HEK293 (cell line): ENCODE measurements at regions of chr6 and their contacts with region 1.

Region 1: DNA sequence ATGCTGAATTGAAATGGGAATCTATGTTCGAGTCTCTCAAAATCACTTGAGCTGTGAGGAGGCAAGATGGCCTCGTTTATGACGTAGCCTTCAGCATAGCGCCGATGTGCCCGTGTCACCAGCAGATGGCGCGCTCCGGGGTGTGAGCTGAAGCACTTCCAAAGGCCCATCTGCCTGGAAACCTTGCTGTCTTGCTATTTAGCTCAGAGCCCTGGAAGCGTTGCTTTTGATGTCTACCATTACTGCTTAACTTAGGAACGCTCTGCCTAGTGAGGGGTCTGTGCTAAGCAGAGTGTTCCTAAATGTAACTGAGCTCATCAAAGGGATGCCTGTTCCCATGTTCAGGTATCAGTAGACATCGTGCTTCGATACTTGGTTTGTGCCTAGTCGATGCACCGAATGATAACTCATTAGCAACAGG is 67.7 kb downstream of the SYCP2L start:
- H3K4me3 ChIP-seq: no peak overlapping the region
- H3K27ac ChIP-seq: no peak overlapping the region
- H3K4me1 ChIP-seq: no peaks in the 10 kb centered on the region
- CTCF ChIP-seq: peak; percentile 80

Region 2: DNA sequence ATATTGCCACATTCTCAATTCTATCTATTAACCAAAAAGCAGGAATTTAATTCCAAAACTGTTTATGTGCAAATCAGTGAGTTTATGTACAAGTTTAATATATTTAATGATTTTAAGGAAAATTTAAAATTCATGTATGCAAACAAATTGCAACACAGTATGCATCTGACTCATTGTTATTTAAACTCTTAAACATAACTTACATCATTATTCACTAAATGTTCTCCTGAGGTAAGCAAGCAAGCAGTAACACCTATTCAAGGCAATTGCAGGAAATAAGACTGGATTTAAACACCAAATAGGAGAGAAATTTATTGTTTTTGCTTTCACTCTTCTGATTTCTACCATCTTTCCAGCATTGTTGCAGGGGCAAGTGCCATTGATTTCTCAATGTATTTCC is 779.3 kb before region 1 on chr6:
- CTCF ChIA-PET with region 1: no interaction called
- POLR2A ChIA-PET with region 1: no interaction called
- H3K4me3 ChIP-seq: no peak overlapping the region
- H3K27ac ChIP-seq: no peak overlapping the region
- H3K4me1 ChIP-seq: no peaks in the 10 kb centered on the region
- CTCF ChIP-seq: no peak

Region 3: DNA sequence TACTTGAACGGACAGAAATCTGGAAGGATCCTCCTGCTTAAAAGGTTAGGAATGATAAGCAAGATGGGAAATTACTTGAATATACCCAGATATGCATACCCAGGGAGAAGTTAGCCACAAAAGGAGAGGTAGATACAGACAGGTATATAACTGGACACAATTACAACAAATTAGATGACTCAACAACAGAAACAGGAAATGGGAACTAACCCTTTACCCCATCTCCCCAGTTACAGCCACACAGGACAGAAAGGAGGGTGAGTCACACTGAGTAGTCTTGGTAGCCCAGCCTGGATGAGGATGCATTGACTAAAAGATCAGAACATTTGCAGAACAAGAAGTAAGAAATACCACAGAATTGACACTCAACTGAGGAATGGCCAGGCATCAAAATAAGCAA is 321.4 kb before region 1 on chr6:
- CTCF ChIA-PET with region 1: no interaction called
- POLR2A ChIA-PET with region 1: no interaction called
- H3K4me3 ChIP-seq: no peak overlapping the region
- H3K27ac ChIP-seq: no peak overlapping the region
- H3K4me1 ChIP-seq: no peaks in the 10 kb centered on the region
- CTCF ChIP-seq: no peak

Region 4: GRCh38 chr6:10968776-10969175 is 14.2 kb after region 1 on chr6:
- CTCF ChIA-PET with region 1: interaction called, 19 read pairs
- POLR2A ChIA-PET with region 1: no interaction called
- H3K4me3 ChIP-seq: no peak overlapping the region
- H3K27ac ChIP-seq: no peak overlapping the region
- H3K4me1 ChIP-seq: no peaks in the 10 kb centered on the region
- CTCF ChIP-seq: no peak

Region 5: GRCh38 chr6:11011787-11012234 is 57.2 kb after region 1 on chr6:
- CTCF ChIA-PET with region 1: interaction called, 10 read pairs
- POLR2A ChIA-PET with region 1: no interaction called
- H3K4me3 ChIP-seq: no peak overlapping the region
- H3K27ac ChIP-seq: no peak overlapping the region
- H3K4me1 ChIP-seq: peaks cover 30% of the 10 kb centered on the region
- CTCF ChIP-seq: no peak

Region 6: GRCh38 chr6:11033825-11034224 is 79.2 kb after region 1 on chr6:
- CTCF ChIA-PET with region 1: interaction called, 29 read pairs
- POLR2A ChIA-PET with region 1: interaction called, 3 read pairs
- H3K4me3 ChIP-seq: no peak overlapping the region
- H3K27ac ChIP-seq: no peak overlapping the region
- H3K4me1 ChIP-seq: peaks cover 10% of the 10 kb centered on the region
- CTCF ChIP-seq: no peak

Region 7: GRCh38 chr6:11055127-11055627 is 100.6 kb after region 1 on chr6:
- CTCF ChIA-PET with region 1: interaction called, 23 read pairs
- POLR2A ChIA-PET with region 1: no interaction called
- H3K4me3 ChIP-seq: no peak overlapping the region
- H3K27ac ChIP-seq: no peak overlapping the region
- H3K4me1 ChIP-seq: peaks cover 8% of the 10 kb centered on the region
- CTCF ChIP-seq: no peak

Region 8: GRCh38 chr6:11575408-11576033 is 620.9 kb after region 1 on chr6:
- CTCF ChIA-PET with region 1: interaction called, 17 read pairs
- POLR2A ChIA-PET with region 1: no interaction called
- H3K4me3 ChIP-seq: no peak overlapping the region
- H3K27ac ChIP-seq: no peak overlapping the region
- H3K4me1 ChIP-seq: no peaks in the 10 kb centered on the region
- CTCF ChIP-seq: peak; percentile 75